ENCODE measurements at regions of chr10 and their contacts with region 1.

Region 1: GRCh38 chr10:32433542-32433941 is 12.4 kb upstream of the CCDC7 start:
- DNase-seq: no peak
- ATAC-seq: no peak
- H3K4me3 ChIP-seq: no peak overlapping the region
- H3K4me3 Mint-ChIP-seq: no peak overlapping the region
- H3K27ac ChIP-seq: no peak overlapping the region
- H3K27ac Mint-ChIP-seq: no peak overlapping the region
- H3K4me1 ChIP-seq: no peaks in the 10 kb centered on the region
- H3K4me1 Mint-ChIP-seq: no peaks in the 10 kb centered on the region
- H3K27me3 ChIP-seq: peaks cover 0 to 8% (median 0%) of the 10 kb centered on the region in 4 experiments
- H3K27me3 Mint-ChIP-seq: peaks cover 45% of the 10 kb centered on the region
- CTCF ChIP-seq: no peak

Region 2: GRCh38 chr10:32326119-32326518 is 107.4 kb before region 1 on chr10:
- CTCF ChIA-PET with region 1: no interaction called
- POLR2A ChIA-PET with region 1: interaction called, 13 read pairs
- intact Hi-C with region 1: no loop called
- DNase-seq: no peak
- ATAC-seq: no peak
- H3K4me3 ChIP-seq: no peak overlapping the region
- H3K4me3 Mint-ChIP-seq: peak overlapping the region; percentile 65
- H3K27ac ChIP-seq: peak overlapping the region in 1 of 2 donors; percentile 32
- H3K27ac Mint-ChIP-seq: peak overlapping the region; percentile 59
- H3K4me1 ChIP-seq: peaks cover 57 to 77% of the 10 kb centered on the region in 2 donors
- H3K4me1 Mint-ChIP-seq: peaks cover 85% of the 10 kb centered on the region
- H3K27me3 ChIP-seq: no peaks in the 10 kb centered on the region
- H3K27me3 Mint-ChIP-seq: no peaks in the 10 kb centered on the region
- CTCF ChIP-seq: no peak

Measured in B cell (primary cell).